ENCODE measurements at regions of chr1 and their contacts with region 1.

Region 1: DNA sequence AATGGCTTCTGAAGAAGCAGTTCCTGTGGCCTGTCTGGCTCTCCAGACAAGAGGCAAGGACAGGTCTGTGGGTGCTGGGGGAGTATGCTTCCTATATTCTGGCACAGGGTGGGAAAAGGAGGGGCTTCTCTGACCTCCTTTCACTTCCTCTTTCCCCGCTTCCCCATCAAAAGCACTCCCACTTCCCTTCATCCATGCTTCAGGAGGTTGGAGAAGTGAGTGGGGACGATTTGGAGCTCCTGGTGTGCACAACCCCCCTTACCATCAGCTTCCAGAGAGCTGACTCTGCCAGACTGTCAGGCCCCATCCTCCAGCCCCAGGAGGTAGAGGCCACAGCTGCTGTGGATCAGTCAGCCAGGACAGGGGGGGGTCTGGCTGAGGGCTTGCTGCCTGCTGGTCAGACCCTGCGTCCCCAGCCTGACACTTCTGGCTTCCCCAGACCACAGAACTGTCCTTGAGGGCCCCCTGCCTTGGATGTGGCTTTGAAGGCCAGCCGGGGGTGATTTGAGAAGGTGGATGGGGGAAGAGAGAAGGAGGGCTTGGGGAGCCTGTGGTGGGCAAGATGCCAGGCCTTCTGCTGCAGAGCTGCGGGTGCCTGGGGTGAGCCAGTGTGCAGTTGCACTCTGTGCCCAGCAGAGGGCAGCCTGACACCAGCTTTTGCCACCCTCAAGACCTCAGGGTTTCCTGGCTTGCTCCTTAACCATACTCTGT is 21.5 kb upstream of the TMEM222 start:
- DNase-seq: peak; percentile 75 to 92 (median 83)
- ATAC-seq: peak; percentile 77 to 87 (median 85)
- H3K4me3 ChIP-seq: no peak overlapping the region
- H3K27ac ChIP-seq: peak overlapping the region; percentile 48 to 94 (median 79)
- H3K4me1 ChIP-seq: peaks cover 3 to 44% (median 31%) of the 10 kb centered on the region in 12 donors
- H3K27me3 ChIP-seq: no peaks in the 10 kb centered on the region
- CTCF ChIP-seq: peak; percentile 92 to 100 (median 98)
- POLR2A ChIP-seq: no peak

Region 2: GRCh38 chr1:26459573-26460031 is 840.9 kb before region 1 on chr1:
- intact Hi-C with region 1: no loop called
- DNase-seq: peak in 2 of 5 donors; percentile 12 to 37
- ATAC-seq: peak; percentile 73 to 92 (median 90)
- H3K4me3 ChIP-seq: no peak overlapping the region
- H3K27ac ChIP-seq: peak overlapping the region in 11 of 12 donors; percentile 3 to 79 (median 63)
- H3K4me1 ChIP-seq: peaks cover 0 to 14% (median 0%) of the 10 kb centered on the region in 12 donors
- H3K27me3 ChIP-seq: no peaks in the 10 kb centered on the region
- CTCF ChIP-seq: no peak
- POLR2A ChIP-seq: no peak

Region 3: DNA sequence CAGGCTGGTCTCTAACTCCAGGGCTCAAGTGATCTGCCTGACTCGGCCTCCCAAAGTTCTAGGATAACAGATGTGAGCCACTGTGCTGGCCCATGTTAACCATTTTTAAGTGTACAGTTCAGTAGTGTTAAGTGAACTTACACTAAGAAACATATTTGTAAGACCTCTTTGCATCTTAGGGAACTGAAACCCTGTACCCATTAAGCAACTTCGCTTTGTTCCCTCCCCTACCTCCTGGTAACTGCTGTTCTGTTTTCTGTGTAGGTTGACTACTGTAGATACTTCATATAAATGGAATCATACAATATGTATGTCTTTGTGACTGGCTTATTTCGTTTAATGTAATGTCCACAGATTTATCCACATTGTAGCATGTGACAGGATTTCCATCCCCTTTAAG is 368.0 kb before region 1 on chr1:
- intact Hi-C with region 1: no loop called
- DNase-seq: no peak
- ATAC-seq: no peak
- H3K4me3 ChIP-seq: no peak overlapping the region
- H3K27ac ChIP-seq: no peak overlapping the region
- H3K4me1 ChIP-seq: peaks cover 0 to 6% (median 2%) of the 10 kb centered on the region in 12 donors
- H3K27me3 ChIP-seq: no peaks in the 10 kb centered on the region
- CTCF ChIP-seq: no peak
- POLR2A ChIP-seq: no peak

Region 4: GRCh38 chr1:27357281-27358037 is 57.0 kb after region 1 on chr1:
- intact Hi-C with region 1: loop called in 2 of 10 experiments (anchors 2 to 10 kb)
- DNase-seq: peak; percentile 70 to 88 (median 80)
- ATAC-seq: peak; percentile 28 to 83 (median 62)
- H3K4me3 ChIP-seq: peak overlapping the region in 2 of 12 donors; percentile 11 to 42
- H3K27ac ChIP-seq: peak overlapping the region in 1 of 12 donors; percentile 9
- H3K4me1 ChIP-seq: peaks cover 0 to 27% (median 6%) of the 10 kb centered on the region in 12 donors
- H3K27me3 ChIP-seq: no peaks in the 10 kb centered on the region
- CTCF ChIP-seq: peak; percentile 94 to 100 (median 98)
- POLR2A ChIP-seq: no peak

Region 5: GRCh38 chr1:27614625-27615344 is 314.3 kb after region 1 on chr1:
- intact Hi-C with region 1: loop called in 5 of 10 experiments (anchors 5 kb)
- DNase-seq: peak in 1 of 5 donors; percentile 65
- ATAC-seq: peak in 1 of 4 donors; percentile 13
- H3K4me3 ChIP-seq: no peak overlapping the region
- H3K27ac ChIP-seq: no peak overlapping the region
- H3K4me1 ChIP-seq: peaks cover 0 to 42% (median 2%) of the 10 kb centered on the region in 12 donors
- H3K27me3 ChIP-seq: no peaks in the 10 kb centered on the region
- CTCF ChIP-seq: no peak
- POLR2A ChIP-seq: no peak

Region 6: GRCh38 chr1:27671964-27672749 is 371.7 kb after region 1 on chr1 and contains the start of gene IFI6:
- intact Hi-C with region 1: loop called in 4 of 10 experiments (anchors 5 to 10 kb)
- DNase-seq: peak; percentile 85 to 91 (median 89)
- ATAC-seq: peak; percentile 95 to 99 (median 98)
- H3K4me3 ChIP-seq: peak within 1 kb of the TSS; percentile 38 to 94 (median 61)
- H3K27ac ChIP-seq: peak within 1 kb of the TSS; percentile 43 to 92 (median 86)
- H3K4me1 ChIP-seq: peaks cover 0 to 55% (median 23%) of the 10 kb centered on the region in 12 donors
- H3K27me3 ChIP-seq: no peaks in the 10 kb centered on the region
- CTCF ChIP-seq: peak in 11 of 12 donors; percentile 5 to 62 (median 42)
- POLR2A ChIP-seq: peak in 1 of 2 donors; percentile 61
- total RNA-seq, gene IFI6: 18.3 to 140 (median 70.2) TPM

Region 7: DNA sequence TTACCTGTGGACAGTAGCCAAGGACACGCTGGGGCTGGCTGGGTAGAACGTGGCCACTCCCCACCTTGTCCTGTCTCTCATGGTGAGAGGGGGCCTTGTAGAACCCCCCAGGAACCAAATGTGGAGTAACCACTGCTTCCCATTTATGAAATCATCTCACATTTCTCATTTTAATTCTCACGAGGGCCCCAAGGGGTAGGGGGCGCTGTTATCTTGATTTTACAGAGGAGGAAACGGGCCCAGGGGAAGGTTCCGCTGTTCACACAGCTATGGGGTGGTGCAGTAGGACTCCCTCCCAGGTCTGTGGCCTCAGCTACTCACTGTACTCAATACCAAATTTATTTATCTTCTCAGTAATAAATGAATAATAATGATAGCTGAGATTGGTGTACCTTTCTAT is 639.8 kb after region 1 on chr1:
- intact Hi-C with region 1: no loop called
- DNase-seq: peak in 3 of 5 donors; percentile 48 to 63 (median 48)
- ATAC-seq: peak in 3 of 4 donors; percentile 45 to 52 (median 51)
- H3K4me3 ChIP-seq: no peak overlapping the region
- H3K27ac ChIP-seq: no peak overlapping the region
- H3K4me1 ChIP-seq: peaks cover 0 to 22% (median 0%) of the 10 kb centered on the region in 12 donors
- H3K27me3 ChIP-seq: peaks cover 0 to 12% (median under 1%) of the 10 kb centered on the region in 9 donors
- CTCF ChIP-seq: peak in 9 of 12 donors; percentile 18 to 43 (median 31)
- POLR2A ChIP-seq: no peak